Vagina (tissue), 2 donors: ENCODE measurements at regions of chr19 and their contacts with region 1.

Region 1: GRCh38 chr19:48907671-48908070 is 7.6 kb downstream of the NUCB1 start:
- DNase-seq: no peak
- H3K4me3 ChIP-seq: no peak overlapping the region
- H3K27ac ChIP-seq: no peak overlapping the region
- H3K4me1 ChIP-seq: peaks cover 4% of the 10 kb centered on the region
- H3K27me3 ChIP-seq: no peaks in the 10 kb centered on the region
- CTCF ChIP-seq: no peak
- POLR2A ChIP-seq: no peak

Region 2: GRCh38 chr19:48954595-48955310 is 47.1 kb after region 1 on chr19 and contains the start of gene BAX:
- intact Hi-C with region 1: loop called (anchors 5 kb)
- DNase-seq: peak in 1 of 2 donors; percentile 94
- H3K4me3 ChIP-seq: peak within 1 kb of the TSS; percentile 62 to 67
- H3K27ac ChIP-seq: peak within 1 kb of the TSS; percentile 89
- H3K4me1 ChIP-seq: peaks cover 17% of the 10 kb centered on the region
- H3K27me3 ChIP-seq: no peaks in the 10 kb centered on the region
- CTCF ChIP-seq: peak in 1 of 3 experiments; percentile 28
- POLR2A ChIP-seq: peak in 1 of 2 donors; percentile 58
- total RNA-seq, gene BAX: 52.3 TPM